ENCODE measurements at regions of chr17 and their contacts with region 1.

Region 1: DNA sequence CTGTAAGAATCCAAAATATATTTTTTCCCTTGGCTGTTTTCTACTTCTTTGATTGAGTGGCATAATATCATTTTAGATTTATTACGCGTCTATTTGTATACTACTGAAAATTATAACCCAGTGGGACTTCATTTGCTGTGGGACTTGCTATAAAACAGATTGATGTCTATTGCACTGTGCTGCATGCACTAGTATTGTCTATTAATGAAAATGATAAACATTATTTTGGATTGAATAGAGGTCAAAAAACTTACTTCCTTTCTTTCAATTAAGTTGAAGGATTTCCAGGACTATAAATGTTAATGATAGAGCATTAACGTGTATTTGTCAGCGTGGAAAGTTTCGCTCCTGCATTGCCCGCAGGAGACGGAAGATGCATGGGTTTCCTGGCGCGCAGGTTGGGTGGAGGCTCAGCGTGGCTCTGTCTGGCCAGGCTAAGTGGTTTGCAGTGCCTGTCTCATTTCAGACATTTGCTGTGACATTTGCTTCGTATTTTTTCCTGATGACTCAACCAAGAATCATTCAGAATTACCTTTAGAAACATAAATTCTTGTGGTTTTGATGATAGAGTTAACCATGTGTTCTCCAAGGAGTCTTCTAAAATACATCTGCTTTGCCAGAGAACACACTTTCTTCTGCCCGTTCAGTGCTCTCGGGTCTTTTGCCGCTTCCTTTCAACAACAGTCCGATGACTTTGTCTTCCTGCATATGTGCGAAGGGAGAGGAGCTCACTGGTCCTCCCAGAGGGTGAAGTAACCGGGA is 216.7 kb downstream of the RPTOR start:
- DNase-seq: peak; percentile 84
- H3K4me3 Mint-ChIP-seq: peak overlapping the region; percentile 56
- H3K27ac Mint-ChIP-seq: peak overlapping the region; percentile 97
- H3K4me1 Mint-ChIP-seq: peaks cover 73% of the 10 kb centered on the region
- H3K27me3 Mint-ChIP-seq: no peaks in the 10 kb centered on the region

Region 2: DNA sequence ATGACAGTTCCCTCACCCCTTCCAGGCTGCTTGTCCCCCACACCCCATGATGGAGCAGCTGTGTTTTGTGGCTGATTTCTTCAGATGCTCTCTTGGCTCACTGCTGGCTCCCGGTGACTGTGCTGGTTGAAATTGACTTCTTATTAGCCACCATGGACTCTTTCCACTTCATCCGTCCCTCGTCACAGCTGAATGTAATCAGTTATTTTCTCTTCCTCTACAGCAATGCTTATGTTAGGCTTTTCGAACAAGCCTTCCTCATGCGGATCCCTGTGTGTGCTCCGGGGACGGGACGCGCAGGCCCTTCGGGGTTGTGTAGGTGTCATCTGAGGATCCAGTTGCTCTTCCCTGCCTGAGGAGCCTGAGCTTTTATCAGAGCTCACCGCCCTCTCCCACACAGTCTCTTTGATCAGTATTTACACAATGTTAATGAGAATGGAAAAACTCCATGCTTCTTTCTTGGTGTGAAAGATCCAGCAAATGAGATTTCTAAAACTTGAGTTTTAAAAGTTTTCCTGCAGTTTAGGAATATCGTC is 129.2 kb before region 1 on chr17:
- CTCF ChIA-PET with region 1: no interaction called
- intact Hi-C with region 1: no loop called
- DNase-seq: no peak
- H3K4me3 Mint-ChIP-seq: no peak overlapping the region
- H3K27ac Mint-ChIP-seq: no peak overlapping the region
- H3K4me1 Mint-ChIP-seq: peaks cover 17% of the 10 kb centered on the region
- H3K27me3 Mint-ChIP-seq: no peaks in the 10 kb centered on the region

Region 3: DNA sequence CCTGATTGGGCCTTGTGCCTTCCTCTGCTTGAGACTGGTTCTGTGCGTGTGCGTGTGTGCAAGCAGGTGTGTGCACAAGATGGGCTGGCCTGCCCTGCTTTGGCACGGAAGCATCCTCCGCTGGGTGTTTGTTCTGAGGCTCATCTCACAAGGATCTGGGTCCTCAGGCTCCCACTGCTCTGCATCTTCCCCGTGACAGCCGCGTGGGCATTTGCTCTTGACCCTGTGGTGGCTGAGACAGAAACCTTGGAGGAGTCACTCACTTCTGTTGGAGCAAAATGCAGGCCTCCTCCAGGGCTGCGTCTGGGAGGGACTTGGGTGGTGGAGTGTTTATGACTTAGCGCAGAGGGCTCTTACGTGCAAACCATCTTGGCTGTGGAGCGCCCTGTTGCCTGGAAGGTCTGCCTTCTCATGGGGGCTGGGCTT is 97.5 kb before region 1 on chr17:
- CTCF ChIA-PET with region 1: no interaction called
- intact Hi-C with region 1: loop called (anchors 5 kb)
- DNase-seq: peak; percentile 67
- H3K4me3 Mint-ChIP-seq: peak overlapping the region; percentile 51
- H3K27ac Mint-ChIP-seq: peak overlapping the region; percentile 86
- H3K4me1 Mint-ChIP-seq: peaks cover 73% of the 10 kb centered on the region
- H3K27me3 Mint-ChIP-seq: no peaks in the 10 kb centered on the region

Region 4: GRCh38 chr17:80743181-80743771 is 18.0 kb before region 1 on chr17:
- CTCF ChIA-PET with region 1: no interaction called
- intact Hi-C with region 1: loop called (anchors 2 kb)
- DNase-seq: peak; percentile 78
- H3K4me3 Mint-ChIP-seq: peak overlapping the region; percentile 55
- H3K27ac Mint-ChIP-seq: peak overlapping the region; percentile 85
- H3K4me1 Mint-ChIP-seq: peaks cover 58% of the 10 kb centered on the region
- H3K27me3 Mint-ChIP-seq: no peaks in the 10 kb centered on the region

Region 5: DNA sequence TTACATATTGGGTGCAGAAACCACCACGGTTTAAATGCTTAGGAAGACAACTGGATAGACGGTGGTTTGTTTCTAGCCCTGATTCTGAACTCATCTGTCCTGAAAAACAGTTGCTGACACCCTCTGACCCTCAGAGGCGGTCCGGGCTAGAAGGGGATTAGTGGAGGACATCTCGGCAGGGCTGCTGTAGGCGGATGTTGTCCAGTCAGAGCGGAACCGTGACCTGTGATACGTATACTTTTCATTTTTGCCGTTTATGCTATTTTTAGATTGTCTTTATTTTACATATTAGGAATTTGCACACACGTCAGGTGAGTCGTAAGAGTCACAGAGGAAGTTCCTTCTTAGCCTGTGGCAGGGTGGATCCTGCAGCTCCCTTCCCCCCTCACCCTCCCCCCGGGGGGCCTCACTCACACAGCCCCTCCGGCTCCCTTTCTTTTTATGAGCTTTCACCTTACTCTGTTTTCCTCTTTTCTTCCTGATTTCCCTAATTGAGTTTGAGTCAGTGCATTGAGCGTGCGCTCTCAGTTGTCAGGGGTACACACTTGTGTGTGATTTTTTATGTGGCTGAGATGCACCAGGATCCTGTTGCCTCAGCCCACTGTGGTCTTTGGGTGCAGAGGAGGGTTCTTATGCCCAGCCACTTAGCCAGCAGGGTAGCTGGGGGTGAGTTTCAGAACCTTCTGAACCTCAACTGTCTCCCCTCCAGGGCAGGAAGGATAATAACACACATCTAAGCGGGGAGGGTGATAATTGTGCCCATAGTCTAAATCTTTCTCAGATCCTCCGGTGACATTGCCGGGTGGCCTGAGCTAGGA is 19.3 kb after region 1 on chr17:
- CTCF ChIA-PET with region 1: interaction called, 6 read pairs
- intact Hi-C with region 1: loop called (anchors 1 kb)
- DNase-seq: peak; percentile 76
- H3K4me3 Mint-ChIP-seq: peak overlapping the region; percentile 76
- H3K27ac Mint-ChIP-seq: peak overlapping the region; percentile 98
- H3K4me1 Mint-ChIP-seq: peaks cover 79% of the 10 kb centered on the region
- H3K27me3 Mint-ChIP-seq: no peaks in the 10 kb centered on the region

Region 6: GRCh38 chr17:80832888-80833583 is 71.7 kb after region 1 on chr17:
- CTCF ChIA-PET with region 1: interaction called, 3 read pairs
- intact Hi-C with region 1: loop called (anchors 1 kb)
- DNase-seq: peak; percentile 91
- H3K4me3 Mint-ChIP-seq: peak overlapping the region; percentile 77
- H3K27ac Mint-ChIP-seq: peak overlapping the region; percentile 96
- H3K4me1 Mint-ChIP-seq: peaks cover 44% of the 10 kb centered on the region
- H3K27me3 Mint-ChIP-seq: no peaks in the 10 kb centered on the region

Region 7: GRCh38 chr17:80876950-80877728 is 115.8 kb after region 1 on chr17:
- CTCF ChIA-PET with region 1: no interaction called
- intact Hi-C with region 1: loop called (anchors 1 kb)
- DNase-seq: peak; percentile 85
- H3K4me3 Mint-ChIP-seq: peak overlapping the region; percentile 64
- H3K27ac Mint-ChIP-seq: peak overlapping the region; percentile 96
- H3K4me1 Mint-ChIP-seq: peaks cover 51% of the 10 kb centered on the region
- H3K27me3 Mint-ChIP-seq: no peaks in the 10 kb centered on the region

Measured in activated naive CD4-positive, alpha-beta T cell treated with anti-CD3 and anti-CD28 coated beads for 36 hours (primary cell).